Esophagus muscularis mucosa (tissue), 4 donors: ENCODE measurements at regions of chr10 and their contacts with region 1.

Region 1: DNA sequence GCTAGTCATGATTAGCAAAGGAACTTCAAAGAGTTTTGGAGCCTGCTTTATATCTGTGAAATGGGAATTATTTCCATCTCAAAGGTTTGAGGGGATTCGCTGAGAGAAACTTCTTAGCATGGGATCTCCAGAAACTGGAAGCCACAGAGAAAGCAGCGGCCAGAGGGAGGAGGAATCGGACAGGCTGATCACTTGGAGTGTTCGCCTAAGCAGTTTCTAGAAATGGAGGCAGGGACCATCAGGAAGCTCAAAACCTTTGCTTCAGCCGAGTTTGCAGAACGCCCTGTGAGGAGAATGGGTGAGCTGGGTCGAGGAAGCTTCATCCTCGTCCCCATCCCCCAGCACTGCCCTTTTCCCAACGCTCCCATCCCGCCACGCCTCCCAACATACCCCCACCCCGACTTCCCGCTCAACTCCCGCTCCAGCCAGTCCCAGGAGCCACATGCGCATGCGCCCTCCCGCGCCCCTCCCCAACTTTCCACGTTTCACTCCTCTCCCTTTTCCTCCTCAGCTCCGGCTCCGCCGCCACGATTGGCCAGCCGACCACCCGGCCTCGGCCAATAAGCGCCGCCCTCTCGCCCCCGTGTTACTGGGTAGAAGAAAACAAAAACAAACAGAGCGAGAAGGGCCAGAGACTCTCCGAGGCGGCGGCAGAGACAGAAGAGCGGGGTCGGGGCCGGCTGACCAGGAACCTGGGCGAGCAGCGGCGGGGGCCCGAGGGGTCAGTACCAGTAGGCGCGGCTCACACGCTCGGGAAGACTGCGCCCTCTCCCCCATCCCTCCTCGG is at the start of gene PDCD4:
- DNase-seq: peak; percentile 100
- H3K4me3 ChIP-seq: peak within 1 kb of the TSS; percentile 96 to 100 (median 99)
- H3K27ac ChIP-seq: peak within 1 kb of the TSS; percentile 97 to 100 (median 99)
- H3K4me1 ChIP-seq: peaks cover 15 to 41% (median 38%) of the 10 kb centered on the region in 4 donors
- H3K27me3 ChIP-seq: no peaks in the 10 kb centered on the region
- CTCF ChIP-seq: no peak
- EP300 ChIP-seq: no peak
- POLR2A ChIP-seq: peak; percentile 70
- total RNA-seq, gene PDCD4: 65.6 to 97.7 (median 78.3) TPM

Region 2: DNA sequence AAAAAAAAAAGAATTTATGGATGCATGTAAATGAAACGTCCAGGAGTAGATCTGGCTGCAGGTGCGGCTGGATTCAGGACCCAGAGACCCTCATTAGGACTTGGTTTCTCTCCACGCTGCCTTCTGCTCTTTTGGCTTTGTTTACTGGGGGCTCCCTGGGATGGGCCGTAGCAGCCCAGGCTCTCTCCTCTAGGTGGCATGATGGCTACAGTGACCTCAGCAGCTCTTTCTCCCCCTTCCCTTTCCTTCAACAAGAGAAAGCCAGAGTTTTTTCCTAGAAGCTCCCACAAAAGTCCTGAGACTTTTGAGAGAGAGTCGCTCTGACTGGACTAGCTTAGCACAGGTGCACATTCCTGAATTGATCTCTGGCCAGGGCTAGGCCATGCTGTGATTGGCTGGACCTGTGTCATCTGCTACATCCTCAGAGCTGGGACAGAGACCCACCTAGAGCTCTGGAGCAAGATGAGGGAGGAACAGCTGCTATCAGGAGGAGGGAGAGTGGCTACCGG is 67.6 kb before region 1 on chr10:
- intact Hi-C with region 1: loop called (anchors 5 kb)
- DNase-seq: no peak
- H3K4me3 ChIP-seq: no peak overlapping the region
- H3K27ac ChIP-seq: peak overlapping the region in 2 of 4 donors; percentile 69 to 73
- H3K4me1 ChIP-seq: peaks cover 25 to 30% (median 26%) of the 10 kb centered on the region in 4 donors
- H3K27me3 ChIP-seq: no peaks in the 10 kb centered on the region
- CTCF ChIP-seq: peak; percentile 64 to 70 (median 69)
- EP300 ChIP-seq: no peak
- POLR2A ChIP-seq: no peak

Region 3: DNA sequence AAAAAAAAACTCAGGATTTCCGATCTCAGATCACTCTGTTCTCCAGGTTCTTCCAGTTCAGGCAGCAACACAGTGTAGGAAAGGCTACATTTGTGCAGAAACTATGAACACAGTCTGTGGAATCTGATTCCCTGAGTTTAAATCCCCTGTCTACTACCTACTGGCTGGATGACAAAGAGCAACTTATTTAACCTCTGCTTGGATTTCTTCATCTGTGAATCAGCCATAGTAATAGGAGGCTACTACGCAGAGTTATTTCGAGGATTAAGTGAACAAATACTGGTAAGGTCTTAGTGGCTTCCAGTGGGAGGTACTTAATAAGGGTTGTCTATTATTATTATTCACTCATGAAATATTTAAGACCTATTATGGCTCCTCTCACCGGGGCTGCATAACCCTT is 44.1 kb before region 1 on chr10:
- intact Hi-C with region 1: loop called (anchors 5 kb)
- DNase-seq: no peak
- H3K4me3 ChIP-seq: no peak overlapping the region
- H3K27ac ChIP-seq: peak overlapping the region; percentile 75 to 84 (median 80)
- H3K4me1 ChIP-seq: peaks cover 28 to 56% (median 51%) of the 10 kb centered on the region in 4 donors
- H3K27me3 ChIP-seq: no peaks in the 10 kb centered on the region
- CTCF ChIP-seq: no peak
- EP300 ChIP-seq: no peak
- POLR2A ChIP-seq: no peak

Region 4: GRCh38 chr10:110918643-110919363 is 47.3 kb after region 1 on chr10 and contains the start of gene BBIP1:
- intact Hi-C with region 1: loop called (anchors 5 kb)
- DNase-seq: peak; percentile 99
- H3K4me3 ChIP-seq: peak within 1 kb of the TSS; percentile 79 to 92 (median 88)
- H3K27ac ChIP-seq: peak within 1 kb of the TSS; percentile 98 to 99 (median 98)
- H3K4me1 ChIP-seq: peaks cover 16 to 45% (median 42%) of the 10 kb centered on the region in 4 donors
- H3K27me3 ChIP-seq: no peaks in the 10 kb centered on the region
- CTCF ChIP-seq: no peak
- EP300 ChIP-seq: peak; percentile 14
- POLR2A ChIP-seq: peak; percentile 69
- total RNA-seq, gene BBIP1: 17.6 to 29.5 (median 27.0) TPM